ENCODE measurements at regions of chr2 and their contacts with region 1.

Region 1: DNA sequence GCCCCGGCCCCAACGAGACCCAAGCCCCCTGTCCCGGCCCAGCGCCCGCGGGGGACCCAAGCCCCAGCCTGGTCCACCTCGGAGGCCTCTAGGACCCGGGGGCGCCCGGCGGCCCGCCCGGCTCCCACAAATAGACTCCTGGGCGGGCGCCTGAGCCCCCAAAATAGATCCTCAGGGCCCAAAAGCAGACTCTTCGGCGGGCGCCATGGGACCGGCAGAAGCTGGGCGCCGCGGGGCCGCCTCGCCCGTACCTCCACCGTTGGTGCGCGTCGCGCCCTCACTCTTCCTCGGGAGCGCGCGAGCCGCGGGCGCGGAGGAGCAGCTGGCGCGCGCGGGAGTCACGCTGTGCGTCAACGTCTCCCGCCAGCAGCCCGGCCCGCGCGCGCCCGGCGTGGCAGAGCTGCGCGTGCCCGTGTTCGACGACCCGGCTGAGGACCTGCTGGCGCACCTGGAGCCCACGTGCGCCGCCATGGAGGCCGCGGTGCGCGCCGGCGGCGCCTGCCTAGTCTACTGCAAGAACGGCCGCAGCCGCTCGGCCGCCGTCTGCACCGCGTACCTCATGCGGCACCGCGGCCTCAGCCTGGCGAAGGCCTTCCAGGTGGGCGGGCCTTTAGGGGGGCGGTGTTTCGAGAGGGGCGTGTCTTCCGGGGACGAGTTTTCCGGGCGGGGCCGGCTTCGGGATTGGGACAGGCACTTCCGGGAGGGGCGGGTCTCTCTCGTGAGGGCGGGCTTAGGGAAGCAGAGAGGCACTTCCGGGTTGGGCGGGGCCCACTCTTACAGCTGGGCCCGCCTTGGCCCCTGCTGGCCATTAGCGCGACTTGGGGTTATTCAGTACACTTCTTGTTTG is 546 bp downstream of the DUSP28 start:
- DNase-seq: peak; percentile 96 to 100
- H3K4me3 ChIP-seq: peak overlapping the region; percentile 68 to 72
- H3K27ac ChIP-seq: peak overlapping the region; percentile 94 to 98
- H3K4me1 ChIP-seq: peaks cover 20 to 29% of the 10 kb centered on the region in 2 donors
- H3K27me3 ChIP-seq: no peaks in the 10 kb centered on the region
- CTCF ChIP-seq: peak; percentile 30 to 34 (median 34)

Region 2: GRCh38 chr2:240250985-240251847 is 309.5 kb before region 1 on chr2:
- intact Hi-C with region 1: loop called (anchors 5 kb)
- DNase-seq: peak; percentile 93 to 98
- H3K4me3 ChIP-seq: peak overlapping the region in 1 of 2 donors; percentile 19
- H3K27ac ChIP-seq: peak overlapping the region; percentile 87 to 93
- H3K4me1 ChIP-seq: peaks cover 14 to 22% of the 10 kb centered on the region in 2 donors
- H3K27me3 ChIP-seq: no peaks in the 10 kb centered on the region
- CTCF ChIP-seq: no peak

Region 3: GRCh38 chr2:240369801-240370585 is 190.7 kb before region 1 on chr2:
- intact Hi-C with region 1: loop called (anchors 10 kb)
- DNase-seq: peak; percentile 24 to 92
- H3K4me3 ChIP-seq: peak overlapping the region in 1 of 2 donors; percentile 14
- H3K27ac ChIP-seq: peak overlapping the region; percentile 90 to 92
- H3K4me1 ChIP-seq: peaks cover 8 to 48% of the 10 kb centered on the region in 2 donors
- H3K27me3 ChIP-seq: no peaks in the 10 kb centered on the region
- CTCF ChIP-seq: no peak

Region 4: GRCh38 chr2:240586198-240586918 is 25.7 kb after region 1 on chr2 and contains the start of gene CAPN10:
- intact Hi-C with region 1: loop called (anchors 1 kb)
- DNase-seq: peak; percentile 87 to 98
- H3K4me3 ChIP-seq: peak within 1 kb of the TSS; percentile 97 to 99
- H3K27ac ChIP-seq: peak within 1 kb of the TSS; percentile 94 to 96
- H3K4me1 ChIP-seq: peaks cover 20 to 28% of the 10 kb centered on the region in 2 donors
- H3K27me3 ChIP-seq: no peaks in the 10 kb centered on the region
- CTCF ChIP-seq: no peak
- total RNA-seq, gene CAPN10: 27.8 TPM

Region 5: DNA sequence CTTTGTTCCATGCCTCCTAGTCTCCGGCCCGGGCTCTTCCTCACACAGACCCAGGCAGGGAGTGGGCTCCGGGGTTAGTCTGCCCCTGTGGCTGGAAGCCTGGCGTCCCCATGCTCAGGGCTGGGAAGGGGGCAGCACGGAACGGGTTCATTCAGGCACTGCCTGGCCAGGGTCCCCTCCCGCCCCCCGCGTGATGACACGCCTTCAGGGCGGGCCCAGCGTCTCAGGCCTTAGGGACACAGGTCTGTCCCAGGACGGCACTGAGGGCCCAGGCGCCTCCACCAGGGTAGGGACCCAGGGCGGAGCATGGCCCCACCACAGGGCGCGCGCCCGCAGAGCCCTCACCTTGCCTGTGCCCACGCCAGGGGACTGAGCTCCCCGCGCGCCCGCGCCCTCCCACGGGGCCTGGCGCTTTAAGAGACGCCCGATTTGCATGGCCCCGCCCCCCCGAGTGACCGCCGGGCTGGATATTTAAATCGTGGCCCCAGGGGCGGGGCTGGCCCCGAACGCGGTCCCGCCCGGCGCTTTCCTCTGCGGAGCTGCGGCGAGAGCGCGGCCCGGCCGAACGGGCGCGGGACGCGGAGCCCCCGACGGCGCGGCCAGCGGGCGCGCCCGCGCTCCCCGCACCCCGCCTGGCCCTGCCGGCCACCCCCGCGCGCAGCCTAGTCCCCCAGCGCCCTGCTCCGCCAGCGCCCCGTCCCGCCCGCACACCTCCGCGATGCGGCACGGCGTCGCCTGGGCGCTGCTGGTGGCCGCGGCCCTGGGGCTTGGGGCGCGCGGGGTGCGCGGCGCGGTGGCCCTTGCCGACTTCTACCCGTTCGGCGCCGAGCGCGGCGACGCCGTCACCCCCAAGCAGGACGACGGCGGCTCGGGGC is 437.7 kb after region 1 on chr2 and contains the start of gene SNED1:
- intact Hi-C with region 1: loop called (anchors 10 kb)
- DNase-seq: peak; percentile 54 to 93
- H3K4me3 ChIP-seq: peak within 1 kb of the TSS; percentile 79 to 91
- H3K27ac ChIP-seq: peak within 1 kb of the TSS; percentile 92 to 93
- H3K4me1 ChIP-seq: peaks cover 39 to 55% of the 10 kb centered on the region in 2 donors
- H3K27me3 ChIP-seq: no peaks in the 10 kb centered on the region
- CTCF ChIP-seq: no peak
- total RNA-seq, gene SNED1: 84.3 TPM